Right cardiac atrium (tissue), 5 donors: ENCODE measurements at regions of chr10 and their contacts with region 1.

Region 1: GRCh38 chr10:129030996-129031843 is 435.8 kb upstream of the MGMT start:
- DNase-seq: peak; percentile 56 to 87 (median 81)
- ATAC-seq: peak; percentile 92 to 93
- H3K4me3 ChIP-seq: no peak overlapping the region
- H3K27ac ChIP-seq: no peak overlapping the region
- H3K4me1 ChIP-seq: no peaks in the 10 kb centered on the region
- H3K27me3 ChIP-seq: no peaks in the 10 kb centered on the region

Region 2: GRCh38 chr10:129288999-129289398 is 257.8 kb after region 1 on chr10:
- intact Hi-C with region 1: no loop called
- DNase-seq: peak in 1 of 3 donors; percentile 35
- ATAC-seq: peak; percentile 55 to 64
- H3K4me3 ChIP-seq: no peak overlapping the region
- H3K27ac ChIP-seq: no peak overlapping the region
- H3K4me1 ChIP-seq: no peaks in the 10 kb centered on the region
- H3K27me3 ChIP-seq: no peaks in the 10 kb centered on the region

Region 3: DNA sequence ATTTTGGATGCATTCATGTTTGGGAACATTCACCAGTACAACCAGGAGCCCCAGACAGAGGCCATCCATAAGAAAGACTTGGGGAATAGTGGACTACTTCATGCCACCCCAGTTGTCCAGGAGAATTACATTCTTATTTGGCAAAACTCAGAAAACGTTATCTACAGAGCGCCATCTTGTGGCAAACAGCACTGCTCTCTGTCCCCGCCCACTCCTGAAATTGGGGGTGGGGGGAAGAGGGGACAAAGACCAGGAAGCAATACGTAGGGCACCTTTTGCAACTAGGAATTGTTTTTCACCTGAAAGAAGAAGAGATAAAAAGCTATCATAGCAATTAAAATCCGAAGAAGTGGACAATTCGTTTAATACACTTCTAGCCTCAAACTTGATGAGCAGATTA is 301.3 kb after region 1 on chr10:
- intact Hi-C with region 1: loop called in 2 of 4 experiments (anchors 10 kb)
- DNase-seq: no peak
- ATAC-seq: no peak
- H3K4me3 ChIP-seq: no peak overlapping the region
- H3K27ac ChIP-seq: no peak overlapping the region
- H3K4me1 ChIP-seq: no peaks in the 10 kb centered on the region
- H3K27me3 ChIP-seq: no peaks in the 10 kb centered on the region

Region 4: GRCh38 chr10:129971381-129972144 is 940.3 kb after region 1 on chr10:
- intact Hi-C with region 1: loop called (anchors 5 to 10 kb)
- DNase-seq: peak; percentile 75 to 90 (median 86)
- ATAC-seq: peak; percentile 89 to 92
- H3K4me3 ChIP-seq: peak overlapping the region; percentile 62
- H3K27ac ChIP-seq: no peak overlapping the region
- H3K4me1 ChIP-seq: no peaks in the 10 kb centered on the region
- H3K27me3 ChIP-seq: no peaks in the 10 kb centered on the region